H1 (cell line): ENCODE measurements at regions of chr5 and their contacts with region 1.

Region 1: GRCh38 chr5:178279725-178280438 is 47.3 kb upstream of the PHYKPL start:
- DNase-seq: peak; percentile 36 to 98
- H3K4me3 ChIP-seq: peak overlapping the region in 1 of 4 experiments; percentile 35; a peak in 1 of 8 replicates
- H3K27ac ChIP-seq: no peak overlapping the region
- H3K4me1 ChIP-seq: peaks cover 0 to 4% (median 2%) of the 10 kb centered on the region in 4 experiments; a peak in 2 of 7 replicates
- H3K27me3 ChIP-seq: peaks cover 0 to 10% (median 2%) of the 10 kb centered on the region in 4 experiments; a peak in 4 of 7 replicates
- CTCF ChIP-seq: peak in 2 of 3 experiments; percentile 95 to 99; a peak in 3 of 4 replicates
- EP300 ChIP-seq: no peak
- POLR2A ChIP-seq: no peak
- RAD21 ChIP-seq: peak; percentile 99 to 100

Region 2: GRCh38 chr5:178182158-178182876 is 97.6 kb before region 1 on chr5:
- CTCF ChIA-PET with region 1: no interaction called
- POLR2A ChIA-PET with region 1: no interaction called
- DNase-seq: no peak
- H3K4me3 ChIP-seq: no peak overlapping the region
- H3K27ac ChIP-seq: peak overlapping the region; percentile 15; the same call in 1 of the 2 replicates
- H3K4me1 ChIP-seq: peaks cover 2 to 25% (median 16%) of the 10 kb centered on the region in 4 experiments; a peak in 6 of 7 replicates
- H3K27me3 ChIP-seq: no peaks in the 10 kb centered on the region
- CTCF ChIP-seq: no peak
- EP300 ChIP-seq: no peak
- POLR2A ChIP-seq: no peak
- RAD21 ChIP-seq: no peak

Region 3: GRCh38 chr5:178297751-178298150 is 17.9 kb after region 1 on chr5:
- CTCF ChIA-PET with region 1: interaction called, 55 read pairs
- POLR2A ChIA-PET with region 1: interaction called, 4 read pairs
- DNase-seq: no peak
- H3K4me3 ChIP-seq: no peak overlapping the region
- H3K27ac ChIP-seq: no peak overlapping the region
- H3K4me1 ChIP-seq: no peaks in the 10 kb centered on the region
- H3K27me3 ChIP-seq: no peaks in the 10 kb centered on the region
- CTCF ChIP-seq: no peak
- EP300 ChIP-seq: no peak
- POLR2A ChIP-seq: no peak
- RAD21 ChIP-seq: no peak

Region 4: GRCh38 chr5:178324481-178325310 is 44.8 kb after region 1 on chr5:
- CTCF ChIA-PET with region 1: interaction called, 79 read pairs
- POLR2A ChIA-PET with region 1: no interaction called
- DNase-seq: peak in 1 of 2 experiments; percentile 45
- H3K4me3 ChIP-seq: no peak overlapping the region
- H3K27ac ChIP-seq: no peak overlapping the region
- H3K4me1 ChIP-seq: peaks cover 0 to 15% (median 7%) of the 10 kb centered on the region in 4 experiments; a peak in 4 of 7 replicates
- H3K27me3 ChIP-seq: no peaks in the 10 kb centered on the region
- CTCF ChIP-seq: no peak
- EP300 ChIP-seq: no peak
- POLR2A ChIP-seq: no peak
- RAD21 ChIP-seq: no peak

Region 5: GRCh38 chr5:178385496-178385890 is 105.6 kb after region 1 on chr5:
- CTCF ChIA-PET with region 1: interaction called, 10 read pairs
- POLR2A ChIA-PET with region 1: no interaction called
- DNase-seq: no peak
- H3K4me3 ChIP-seq: no peak overlapping the region
- H3K27ac ChIP-seq: no peak overlapping the region
- H3K4me1 ChIP-seq: peaks cover 0 to 24% (median 10%) of the 10 kb centered on the region in 4 experiments; a peak in 5 of 7 replicates
- H3K27me3 ChIP-seq: no peaks in the 10 kb centered on the region; a peak in 1 of 7 replicates
- CTCF ChIP-seq: no peak
- EP300 ChIP-seq: no peak
- POLR2A ChIP-seq: no peak
- RAD21 ChIP-seq: no peak

Region 6: DNA sequence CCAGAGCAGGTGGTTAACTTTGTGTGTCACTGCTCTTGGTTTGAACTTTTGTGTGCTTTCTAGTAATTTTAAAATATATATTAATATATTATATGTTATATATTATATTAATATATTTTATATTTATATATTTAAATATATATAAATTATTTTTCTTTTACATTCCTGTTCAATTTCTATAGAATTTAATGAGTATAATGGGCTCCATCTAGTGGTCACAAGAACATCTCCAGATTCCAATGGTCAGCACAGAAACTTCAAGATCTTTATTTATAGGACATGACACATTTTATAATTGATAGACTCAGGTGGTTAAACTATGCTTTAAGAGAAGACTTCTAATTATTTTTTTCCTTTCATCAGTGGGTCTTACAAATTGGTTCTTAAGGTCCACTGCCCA is 271.2 kb after region 1 on chr5:
- CTCF ChIA-PET with region 1: interaction called, 23 read pairs
- POLR2A ChIA-PET with region 1: no interaction called
- DNase-seq: no peak
- H3K4me3 ChIP-seq: no peak overlapping the region
- H3K27ac ChIP-seq: no peak overlapping the region
- H3K4me1 ChIP-seq: peaks cover 2 to 14% (median 6%) of the 10 kb centered on the region in 4 experiments
- H3K27me3 ChIP-seq: peaks cover 0 to 2% (median 0%) of the 10 kb centered on the region in 4 experiments; a peak in 2 of 7 replicates
- CTCF ChIP-seq: peak in 1 of 3 experiments; percentile 2; a peak in 2 of 4 replicates
- EP300 ChIP-seq: no peak
- POLR2A ChIP-seq: no peak
- RAD21 ChIP-seq: peak in 1 of 2 experiments; percentile 33; a peak in 3 of 4 replicates

Region 7: GRCh38 chr5:178590141-178590923 is 310.4 kb after region 1 on chr5 and contains the start of gene COL23A1:
- CTCF ChIA-PET with region 1: interaction called, 131 read pairs
- POLR2A ChIA-PET with region 1: interaction called, 3 read pairs
- DNase-seq: peak in 1 of 2 experiments; percentile 83
- H3K4me3 ChIP-seq: peak within 1 kb of the TSS; percentile 32 to 68 (median 57)
- H3K27ac ChIP-seq: no peak within 1 kb of the TSS
- H3K4me1 ChIP-seq: peaks cover 5 to 8% (median 7%) of the 10 kb centered on the region in 4 experiments
- H3K27me3 ChIP-seq: peaks cover 13 to 28% (median 22%) of the 10 kb centered on the region in 4 experiments
- CTCF ChIP-seq: peak in 2 of 3 experiments; percentile 88 to 93; a peak in 3 of 4 replicates
- EP300 ChIP-seq: no peak
- POLR2A ChIP-seq: no peak
- RAD21 ChIP-seq: peak; percentile 90 to 94
- total RNA-seq, gene COL23A1: 4.7 and 5.9 TPM in 2 replicates